PC-3 (cell line): ENCODE measurements at regions of chr1 and their contacts with region 1.

Region 1: DNA sequence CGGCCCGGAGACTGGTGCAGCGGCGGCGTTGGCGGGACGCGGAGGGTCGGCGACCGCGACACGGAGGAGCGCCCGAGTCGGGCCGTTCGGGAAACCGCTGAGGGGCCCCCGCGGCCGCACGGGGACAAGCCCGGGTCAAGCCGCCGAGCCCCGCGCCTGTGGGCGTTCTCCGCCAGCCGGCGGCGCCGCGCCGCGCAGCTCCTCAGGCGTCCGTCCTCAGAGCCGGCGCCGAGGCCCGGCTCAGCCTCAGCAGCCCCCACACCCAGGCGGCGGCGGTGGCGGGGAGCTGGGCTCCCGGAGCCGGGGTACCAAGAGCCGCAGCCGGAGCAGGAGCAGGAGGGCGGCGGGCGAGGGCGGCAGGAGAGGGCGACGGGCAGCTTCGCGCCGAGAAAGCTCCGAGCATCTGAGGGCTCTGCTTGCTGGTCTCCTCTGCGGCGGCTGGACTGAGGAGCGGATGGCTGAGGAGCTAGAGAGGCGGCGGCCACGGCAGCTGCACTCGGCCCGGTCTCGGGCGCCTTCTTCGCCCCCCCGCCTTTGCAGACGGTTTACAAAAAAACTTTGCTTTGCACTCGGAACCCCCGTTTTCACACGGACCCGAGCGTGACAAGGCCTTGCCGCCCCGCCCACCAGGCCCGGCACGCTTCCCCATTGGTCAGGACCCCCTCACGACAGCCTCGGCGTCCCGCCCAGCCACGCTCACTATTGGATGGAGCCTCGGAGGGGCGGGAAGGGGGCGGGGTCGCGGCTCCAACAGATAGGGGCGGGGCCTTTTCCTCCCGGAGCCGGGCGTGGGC is at the start of gene SLC30A1:
- DNase-seq: peak; percentile 99
- ATAC-seq: peak; percentile 84
- H3K4me3 ChIP-seq: peak within 1 kb of the TSS; percentile 86
- H3K27ac ChIP-seq: peak within 1 kb of the TSS; percentile 24; the same call in 1 of the 2 replicates
- H3K4me1 ChIP-seq: peaks cover 36% of the 10 kb centered on the region
- H3K27me3 ChIP-seq: no peaks in the 10 kb centered on the region
- CTCF ChIP-seq: no peak
- total RNA-seq, gene SLC30A1: 6.7 and 8.2 TPM in 2 replicates

Region 2: GRCh38 chr1:211382714-211383480 is 195.9 kb before region 1 on chr1:
- CTCF ChIA-PET with region 1: no interaction called
- POLR2A ChIA-PET with region 1: no interaction called
- intact Hi-C with region 1: loop called (anchors 5 kb)
- DNase-seq: peak; percentile 97
- ATAC-seq: peak; percentile 96
- H3K4me3 ChIP-seq: peak overlapping the region; percentile 86
- H3K27ac ChIP-seq: peak overlapping the region; percentile 77
- H3K4me1 ChIP-seq: peaks cover 25% of the 10 kb centered on the region
- H3K27me3 ChIP-seq: no peaks in the 10 kb centered on the region
- CTCF ChIP-seq: no peak

Region 3: GRCh38 chr1:211476200-211476849 is 102.5 kb before region 1 on chr1:
- CTCF ChIA-PET with region 1: interaction called, 12 read pairs
- POLR2A ChIA-PET with region 1: no interaction called
- intact Hi-C with region 1: loop called (anchors 5 kb)
- DNase-seq: peak; percentile 81
- ATAC-seq: peak; percentile 87
- H3K4me3 ChIP-seq: no peak overlapping the region
- H3K27ac ChIP-seq: no peak overlapping the region
- H3K4me1 ChIP-seq: no peaks in the 10 kb centered on the region
- H3K27me3 ChIP-seq: peaks cover 7% of the 10 kb centered on the region
- CTCF ChIP-seq: peak; percentile 97

Region 4: DNA sequence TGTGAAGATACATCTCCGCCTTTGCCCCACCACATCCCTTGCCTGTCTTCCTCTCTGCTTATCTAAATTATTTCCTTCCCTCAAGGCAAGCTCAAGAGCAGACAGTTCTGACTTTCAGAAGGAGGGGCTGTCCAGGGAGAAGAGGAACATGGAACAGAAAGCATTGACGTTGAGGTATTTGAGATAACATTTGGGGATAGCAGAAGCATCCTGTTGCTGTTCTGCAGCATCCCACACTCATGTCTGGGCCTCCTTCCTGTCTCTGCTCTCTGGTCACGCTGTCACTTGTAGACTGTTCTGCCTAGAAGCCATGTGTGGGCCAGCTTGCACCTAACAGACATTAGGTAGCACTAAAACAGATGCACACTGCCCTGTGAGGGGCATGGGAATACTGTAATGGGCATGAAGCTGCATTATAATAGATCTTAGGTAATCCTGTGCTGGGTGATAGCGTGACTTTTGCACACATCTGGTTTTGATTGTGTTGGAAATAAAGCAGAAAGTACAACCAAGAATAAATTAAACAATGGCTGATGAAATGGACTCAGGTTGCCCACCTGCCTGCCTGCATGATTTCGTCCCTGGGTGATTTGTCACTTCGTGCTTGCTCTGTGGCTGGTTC is 86.2 kb before region 1 on chr1:
- CTCF ChIA-PET with region 1: no interaction called
- POLR2A ChIA-PET with region 1: no interaction called
- intact Hi-C with region 1: no loop called
- DNase-seq: no peak
- ATAC-seq: no peak
- H3K4me3 ChIP-seq: no peak overlapping the region
- H3K27ac ChIP-seq: no peak overlapping the region
- H3K4me1 ChIP-seq: peaks cover 6% of the 10 kb centered on the region; the same call in 1 of the 2 replicates
- H3K27me3 ChIP-seq: no peaks in the 10 kb centered on the region
- CTCF ChIP-seq: no peak

Region 5: GRCh38 chr1:211654838-211655787 is 76.3 kb after region 1 on chr1:
- CTCF ChIA-PET with region 1: interaction called, 3 read pairs
- POLR2A ChIA-PET with region 1: interaction called, 7 read pairs
- intact Hi-C with region 1: loop called (anchors 1 kb)
- DNase-seq: peak; percentile 93
- ATAC-seq: peak; percentile 88
- H3K4me3 ChIP-seq: no peak overlapping the region
- H3K27ac ChIP-seq: no peak overlapping the region
- H3K4me1 ChIP-seq: peaks cover 13% of the 10 kb centered on the region
- H3K27me3 ChIP-seq: no peaks in the 10 kb centered on the region
- CTCF ChIP-seq: peak; percentile 99

Region 6: GRCh38 chr1:212234431-212235395 is 655.9 kb after region 1 on chr1:
- CTCF ChIA-PET with region 1: no interaction called
- POLR2A ChIA-PET with region 1: interaction called, 18 read pairs
- intact Hi-C with region 1: no loop called
- DNase-seq: peak; percentile 91
- ATAC-seq: peak; percentile 100
- H3K4me3 ChIP-seq: no peak overlapping the region
- H3K27ac ChIP-seq: peak overlapping the region; percentile 24
- H3K4me1 ChIP-seq: peaks cover 16% of the 10 kb centered on the region
- H3K27me3 ChIP-seq: no peaks in the 10 kb centered on the region
- CTCF ChIP-seq: no peak